CD4-positive, alpha-beta memory T cell (primary cell): ENCODE measurements at regions of chr1 and their contacts with region 1.

Region 1: GRCh38 chr1:212791676-212792395 is at the starts of genes NSL1 and TATDN3:
- DNase-seq: peak; percentile 88 to 94 (median 90)
- H3K4me3 ChIP-seq: peak within 1 kb of the TSS; percentile 96 to 100
- H3K4me3 Mint-ChIP-seq: peak within 1 kb of the TSS; percentile 92 to 99 (median 96)
- H3K27ac ChIP-seq: peak within 1 kb of the TSS; percentile 82
- H3K27ac Mint-ChIP-seq: peak within 1 kb of the TSS; percentile 94 to 98 (median 96)
- H3K4me1 ChIP-seq: peaks cover 48% of the 10 kb centered on the region
- H3K4me1 Mint-ChIP-seq: peaks cover 23 to 50% (median 36%) of the 10 kb centered on the region in 4 donors
- H3K27me3 ChIP-seq: no peaks in the 10 kb centered on the region
- H3K27me3 Mint-ChIP-seq: no peaks in the 10 kb centered on the region
- total RNA-seq, gene NSL1: 38.0 to 38.5 TPM
- total RNA-seq, gene TATDN3: 13.8 to 17.2 TPM

Region 2: DNA sequence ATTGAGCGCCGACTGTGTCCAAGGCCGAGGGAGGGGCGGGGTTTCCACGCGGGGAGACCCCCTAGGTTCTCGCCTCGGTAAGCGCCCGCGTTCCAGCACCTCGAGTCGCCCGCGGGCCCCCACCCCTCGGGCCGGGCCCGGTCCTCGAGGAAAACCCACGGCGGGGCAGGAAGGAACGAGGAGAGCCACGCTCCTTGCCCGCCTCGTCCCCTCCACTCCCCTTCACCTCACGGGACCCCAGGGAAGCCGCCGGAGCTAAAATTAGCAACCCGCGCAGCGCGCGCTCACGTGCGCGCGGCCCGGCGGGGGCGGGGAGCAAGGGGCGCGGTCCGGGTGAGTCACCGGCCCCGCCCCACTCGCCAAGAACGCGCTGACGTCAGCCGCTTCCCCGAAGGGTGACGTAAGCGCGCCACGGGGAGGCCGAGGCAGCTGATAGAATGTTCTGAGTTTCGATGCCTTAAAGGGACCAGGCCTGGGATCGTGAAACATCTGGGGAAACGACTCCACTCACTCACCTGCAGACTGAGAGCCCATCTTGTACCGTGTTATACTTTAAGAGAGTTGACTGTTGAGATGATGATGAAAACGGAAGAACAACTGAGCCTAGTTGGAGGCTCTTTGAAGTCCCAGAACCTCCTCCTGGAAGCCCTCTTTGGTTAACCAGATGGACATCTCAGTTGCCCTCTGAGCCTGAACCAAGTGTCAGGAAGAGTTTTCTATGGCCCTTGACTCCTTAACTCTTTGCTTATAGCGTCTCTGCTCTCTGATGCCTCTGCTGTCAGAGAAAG is 232.9 kb before region 1 on chr1:
- CTCF ChIA-PET with region 1: no interaction called
- POLR2A ChIA-PET with region 1: no interaction called
- intact Hi-C with region 1: loop called (anchors 5 kb)
- DNase-seq: peak; percentile 90 to 92 (median 91)
- H3K4me3 ChIP-seq: peak overlapping the region in 1 of 2 donors; percentile 64
- H3K4me3 Mint-ChIP-seq: peak overlapping the region; percentile 83 to 93 (median 86)
- H3K27ac ChIP-seq: peak overlapping the region; percentile 79
- H3K27ac Mint-ChIP-seq: peak overlapping the region; percentile 81 to 100 (median 99)
- H3K4me1 ChIP-seq: peaks cover 11% of the 10 kb centered on the region
- H3K4me1 Mint-ChIP-seq: peaks cover 2 to 16% (median 8%) of the 10 kb centered on the region in 4 donors
- H3K27me3 ChIP-seq: no peaks in the 10 kb centered on the region
- H3K27me3 Mint-ChIP-seq: peaks cover 4% of the 10 kb centered on the region in 2 donors

Region 3: GRCh38 chr1:212665241-212666115 is 126.4 kb before region 1 on chr1:
- CTCF ChIA-PET with region 1: interaction called, 13 read pairs
- POLR2A ChIA-PET with region 1: no interaction called
- intact Hi-C with region 1: no loop called
- DNase-seq: peak; percentile 65 to 80 (median 71)
- H3K4me3 ChIP-seq: peak overlapping the region in 1 of 2 donors; percentile 40
- H3K4me3 Mint-ChIP-seq: peak overlapping the region; percentile 43 to 86 (median 82)
- H3K27ac ChIP-seq: no peak overlapping the region
- H3K27ac Mint-ChIP-seq: peak overlapping the region in 1 of 7 donors; percentile 19
- H3K4me1 ChIP-seq: peaks cover 5% of the 10 kb centered on the region
- H3K4me1 Mint-ChIP-seq: peaks cover 1 to 7% (median 6%) of the 10 kb centered on the region in 4 donors
- H3K27me3 ChIP-seq: no peaks in the 10 kb centered on the region
- H3K27me3 Mint-ChIP-seq: peaks cover 1 to 2% of the 10 kb centered on the region in 2 donors

Region 4: GRCh38 chr1:212857992-212858460 is 66.2 kb after region 1 on chr1 and contains the start of gene FLVCR1:
- CTCF ChIA-PET with region 1: interaction called, 3 read pairs
- POLR2A ChIA-PET with region 1: interaction called, 28 read pairs
- intact Hi-C with region 1: loop called (anchors 1 kb)
- DNase-seq: peak; percentile 89 to 94 (median 90)
- H3K4me3 ChIP-seq: peak within 1 kb of the TSS; percentile 58 to 75
- H3K4me3 Mint-ChIP-seq: peak within 1 kb of the TSS in 7 of 8 donors; percentile 58 to 98 (median 95)
- H3K27ac ChIP-seq: peak within 1 kb of the TSS; percentile 71
- H3K27ac Mint-ChIP-seq: peak within 1 kb of the TSS; percentile 91 to 97 (median 93)
- H3K4me1 ChIP-seq: peaks cover 44% of the 10 kb centered on the region
- H3K4me1 Mint-ChIP-seq: peaks cover 11 to 20% (median 18%) of the 10 kb centered on the region in 4 donors
- H3K27me3 ChIP-seq: no peaks in the 10 kb centered on the region
- H3K27me3 Mint-ChIP-seq: no peaks in the 10 kb centered on the region
- total RNA-seq, gene FLVCR1: 10.8 to 12.7 TPM

Region 5: GRCh38 chr1:213051127-213051880 is 259.5 kb after region 1 on chr1 and contains the start of gene RPS6KC1:
- CTCF ChIA-PET with region 1: no interaction called
- POLR2A ChIA-PET with region 1: interaction called, 5 read pairs
- intact Hi-C with region 1: loop called (anchors 1 kb)
- DNase-seq: peak; percentile 73 to 83 (median 79)
- H3K4me3 ChIP-seq: peak within 1 kb of the TSS; percentile 61 to 97
- H3K4me3 Mint-ChIP-seq: peak within 1 kb of the TSS; percentile 95 to 99 (median 96)
- H3K27ac ChIP-seq: peak within 1 kb of the TSS; percentile 61
- H3K27ac Mint-ChIP-seq: peak within 1 kb of the TSS; percentile 74 to 97 (median 95)
- H3K4me1 ChIP-seq: peaks cover 18% of the 10 kb centered on the region
- H3K4me1 Mint-ChIP-seq: peaks cover 24 to 36% (median 29%) of the 10 kb centered on the region in 4 donors
- H3K27me3 ChIP-seq: no peaks in the 10 kb centered on the region
- H3K27me3 Mint-ChIP-seq: peaks cover 8 to 18% of the 10 kb centered on the region in 2 donors
- total RNA-seq, gene RPS6KC1: 13.2 to 15.4 TPM